ENCODE measurements at regions of chr2 and their contacts with region 1.

Region 1: GRCh38 chr2:201182650-201183364 is at the start of gene CASP10:
- DNase-seq: peak; percentile 52
- H3K4me3 ChIP-seq: peak within 1 kb of the TSS; percentile 22
- H3K27ac ChIP-seq: no peak within 1 kb of the TSS
- H3K27me3 ChIP-seq: no peaks in the 10 kb centered on the region
- CTCF ChIP-seq: peak; percentile 24

Region 2: DNA sequence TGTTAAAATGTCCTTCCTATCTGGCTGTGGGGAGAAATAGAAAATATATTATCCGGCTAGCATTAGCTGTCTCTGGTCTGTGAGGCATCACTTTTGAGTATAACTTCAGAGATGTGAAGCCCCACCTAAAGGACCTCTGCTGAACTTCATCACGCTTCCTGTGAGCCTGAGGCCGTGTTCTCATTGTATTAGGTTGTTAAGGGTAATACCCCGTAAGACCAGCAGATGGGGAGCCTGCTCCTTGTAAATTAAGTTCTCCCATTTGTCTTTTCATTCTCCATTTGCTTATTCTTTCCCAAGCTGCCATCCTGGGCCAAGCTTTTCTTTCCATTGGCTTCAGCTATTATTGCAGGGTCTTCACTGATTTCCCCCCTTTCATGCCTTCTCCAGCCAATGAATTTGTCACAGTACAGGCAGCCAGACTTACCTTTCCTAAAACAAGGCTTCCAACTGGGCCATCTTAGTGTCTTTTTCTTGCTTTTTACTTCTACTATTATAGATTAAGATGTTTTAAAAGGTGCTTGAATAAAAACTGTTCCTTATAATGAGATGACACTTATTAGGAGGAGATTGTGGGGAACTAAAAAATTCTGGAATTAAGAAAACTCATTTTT is 281.2 kb before region 1 on chr2:
- in situ Hi-C with region 1: loop called (anchors 25 kb)
- DNase-seq: peak; percentile 94
- H3K4me3 ChIP-seq: no peak overlapping the region
- H3K27ac ChIP-seq: no peak overlapping the region
- H3K27me3 ChIP-seq: no peaks in the 10 kb centered on the region
- CTCF ChIP-seq: peak; percentile 84

Region 3: GRCh38 chr2:202418511-202418910 is 1235.7 kb after region 1 on chr2:
- in situ Hi-C with region 1: no loop called
- DNase-seq: no peak
- H3K4me3 ChIP-seq: no peak overlapping the region
- H3K27ac ChIP-seq: no peak overlapping the region
- H3K27me3 ChIP-seq: no peaks in the 10 kb centered on the region
- CTCF ChIP-seq: no peak

Measured in brain microvascular endothelial cell (primary cell).